ENCODE measurements at regions of chr12 and their contacts with region 1.

Region 1: DNA sequence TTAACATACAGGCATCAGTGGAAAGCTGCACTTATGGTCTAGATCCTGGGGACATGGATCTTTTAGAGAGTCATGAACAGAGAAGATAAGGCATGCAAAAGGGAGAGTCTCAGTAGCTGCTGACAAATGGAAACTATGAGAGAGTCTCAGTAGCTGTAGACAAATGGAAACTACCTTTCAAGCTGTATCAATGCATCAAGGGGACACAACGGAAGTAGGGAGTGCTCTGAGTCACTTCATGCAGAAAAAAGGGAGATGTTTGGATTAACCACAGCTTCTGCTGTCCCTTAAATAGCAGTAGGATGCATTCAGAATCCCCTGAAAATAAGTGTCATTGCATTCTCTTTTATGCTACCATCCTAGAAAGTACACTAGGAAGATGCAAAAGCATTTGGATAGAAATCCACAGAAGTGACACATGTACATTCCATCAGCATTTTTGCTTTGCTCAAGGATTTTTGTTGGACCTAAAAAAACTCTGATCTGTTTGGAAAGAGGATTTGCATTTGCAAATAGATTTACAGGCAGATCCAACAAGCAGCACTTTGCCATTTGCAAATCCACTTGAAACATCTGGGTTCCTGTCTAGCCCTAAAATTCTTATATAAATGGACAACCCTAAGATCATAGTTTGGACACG is 227.5 kb upstream of the LMO3 start:
- DNase-seq: peak; percentile 32
- CTCF ChIP-seq: no peak

Region 2: GRCh38 chr12:16844875-16845274 is 11.4 kb after region 1 on chr12:
- CTCF ChIA-PET with region 1: interaction called, 14 read pairs
- POLR2A ChIA-PET with region 1: no interaction called
- DNase-seq: no peak
- CTCF ChIP-seq: no peak

Region 3: GRCh38 chr12:16857456-16857923 is 24.0 kb after region 1 on chr12:
- CTCF ChIA-PET with region 1: interaction called, 17 read pairs
- POLR2A ChIA-PET with region 1: interaction called, 4 read pairs
- DNase-seq: peak; percentile 47
- CTCF ChIP-seq: no peak

Region 4: DNA sequence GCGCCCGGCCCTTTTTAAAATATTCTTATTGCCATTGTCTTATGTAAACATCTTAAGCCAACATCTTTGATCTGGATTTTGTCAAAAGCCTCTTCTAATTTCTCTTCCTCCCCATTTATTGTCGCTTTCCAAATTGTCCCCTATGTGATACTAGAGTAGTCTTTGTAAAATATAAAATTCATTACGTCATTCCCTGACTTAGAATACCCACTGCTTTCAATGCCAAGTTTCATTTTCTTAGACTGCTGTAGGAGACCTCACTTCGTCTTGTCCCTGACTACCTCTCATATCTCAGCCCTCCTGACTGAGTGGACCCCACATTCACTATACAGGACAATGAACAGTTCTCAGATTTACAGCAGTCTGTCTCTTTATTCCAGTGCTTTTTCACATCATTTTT is 406.4 kb after region 1 on chr12:
- CTCF ChIA-PET with region 1: no interaction called
- POLR2A ChIA-PET with region 1: no interaction called
- DNase-seq: no peak
- CTCF ChIP-seq: no peak